Tibial artery (tissue), 4 donors: ENCODE measurements at regions of chr9 and their contacts with region 1.

Region 1: DNA sequence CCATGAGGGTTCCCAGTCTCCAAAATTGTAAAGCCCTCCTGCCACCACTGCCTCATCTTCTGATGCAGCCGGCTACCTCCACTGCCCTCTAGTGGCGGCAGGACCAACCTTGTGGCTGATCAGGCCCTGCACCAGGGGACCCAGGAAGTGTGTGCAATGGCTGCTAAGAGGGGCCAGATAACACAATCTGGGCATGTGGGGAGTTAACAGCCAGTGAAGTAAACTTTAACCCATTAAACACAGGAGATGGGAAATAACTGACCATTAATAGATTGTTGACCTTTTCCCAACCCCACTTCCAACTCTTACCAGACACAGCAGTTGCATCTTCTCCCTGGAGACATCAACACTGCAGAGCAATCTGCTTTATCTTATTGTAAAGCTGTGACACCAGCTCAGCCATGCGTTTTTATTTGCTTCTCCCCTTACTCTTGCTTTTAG is 63.3 kb downstream of the FREM1 start:
- DNase-seq: peak in 1 of 2 donors; percentile 27
- H3K4me3 ChIP-seq: no peak overlapping the region
- H3K27ac ChIP-seq: no peak overlapping the region
- H3K4me1 ChIP-seq: no peaks in the 10 kb centered on the region
- H3K27me3 ChIP-seq: no peaks in the 10 kb centered on the region
- CTCF ChIP-seq: peak; percentile 39 to 61

Region 2: GRCh38 chr9:14353222-14354056 is 493.5 kb before region 1 on chr9:
- intact Hi-C with region 1: no loop called
- DNase-seq: peak; percentile 96
- H3K4me3 ChIP-seq: peak overlapping the region; percentile 14 to 37
- H3K27ac ChIP-seq: peak overlapping the region; percentile 92 to 94
- H3K4me1 ChIP-seq: peaks cover 0 to 77% (median 50%) of the 10 kb centered on the region in 4 donors
- H3K27me3 ChIP-seq: no peaks in the 10 kb centered on the region
- CTCF ChIP-seq: peak; percentile 88 to 92

Region 3: GRCh38 chr9:14779566-14780022 is 67.3 kb before region 1 on chr9:
- intact Hi-C with region 1: no loop called
- DNase-seq: no peak
- H3K4me3 ChIP-seq: no peak overlapping the region
- H3K27ac ChIP-seq: no peak overlapping the region
- H3K4me1 ChIP-seq: peaks cover 0 to 8% (median 1%) of the 10 kb centered on the region in 4 donors
- H3K27me3 ChIP-seq: no peaks in the 10 kb centered on the region
- CTCF ChIP-seq: no peak

Region 4: DNA sequence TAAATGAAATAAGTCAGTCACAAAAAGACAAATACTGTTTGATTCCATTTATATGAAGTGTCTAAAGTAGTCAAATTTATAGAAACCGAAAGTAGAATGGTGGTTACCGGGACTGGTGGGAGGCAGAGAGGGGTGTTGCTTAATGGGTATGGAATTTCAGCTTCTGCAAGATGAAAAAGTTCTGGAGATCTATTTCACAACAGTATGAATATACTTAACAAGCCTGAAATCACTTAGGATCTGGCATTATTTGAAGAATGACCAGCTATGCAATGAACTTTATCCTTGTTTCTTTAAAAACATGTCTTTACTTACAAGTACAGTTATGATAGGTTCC is 78.0 kb after region 1 on chr9:
- intact Hi-C with region 1: loop called (anchors 2 kb)
- DNase-seq: no peak
- H3K4me3 ChIP-seq: peak overlapping the region; percentile 25 to 28
- H3K27ac ChIP-seq: peak overlapping the region in 1 of 2 donors; percentile 27
- H3K4me1 ChIP-seq: peaks cover 0 to 5% (median 2%) of the 10 kb centered on the region in 4 donors
- H3K27me3 ChIP-seq: no peaks in the 10 kb centered on the region
- CTCF ChIP-seq: no peak